ENCODE measurements at regions of chrX and their contacts with region 1.

Region 1: DNA sequence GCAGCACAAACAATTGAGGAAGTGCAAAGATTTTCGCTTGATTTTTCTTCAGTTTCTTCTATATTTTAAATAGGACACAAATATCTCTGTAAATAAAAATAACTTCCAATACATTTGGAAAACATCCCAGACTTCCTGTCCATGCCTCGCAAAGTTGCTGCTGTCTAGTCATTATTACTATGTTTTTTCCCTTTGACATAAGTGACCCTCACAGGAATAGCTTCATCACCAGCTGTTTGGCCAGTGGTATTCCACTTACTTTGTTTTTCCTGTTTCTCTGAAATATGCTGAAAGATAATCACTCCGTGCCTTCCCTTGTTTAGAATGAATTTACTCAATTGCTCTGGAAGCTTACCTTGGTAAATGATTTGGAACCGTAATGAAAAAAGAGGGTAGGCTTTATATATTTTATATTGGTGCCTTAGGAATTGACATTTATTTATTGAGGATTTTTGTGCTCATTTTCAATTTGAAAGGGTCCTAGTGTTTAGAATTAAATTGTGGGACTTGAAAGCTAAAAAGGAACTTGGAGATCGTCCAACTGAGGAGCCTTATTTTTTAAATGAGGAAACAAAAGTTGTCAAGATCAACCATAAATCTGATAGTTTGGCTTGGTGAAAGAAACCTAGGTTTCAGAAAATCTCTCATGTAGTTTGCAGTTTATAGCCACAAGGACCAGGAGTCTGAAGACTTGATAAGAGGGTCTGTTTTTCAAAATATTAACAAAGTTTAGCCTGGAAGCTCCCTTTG is 65.6 kb downstream of the CDKL5 start:
- DNase-seq: no peak
- H3K4me3 ChIP-seq: no peak overlapping the region
- H3K27ac ChIP-seq: no peak overlapping the region
- H3K4me1 ChIP-seq: no peaks in the 10 kb centered on the region
- H3K27me3 ChIP-seq: no peaks in the 10 kb centered on the region
- CTCF ChIP-seq: no peak

Region 2: GRCh38 chrX:17435466-17435865 is 1055.5 kb before region 1 on chrX:
- intact Hi-C with region 1: loop called (anchors 10 kb)
- DNase-seq: no peak
- H3K4me3 ChIP-seq: no peak overlapping the region
- H3K27ac ChIP-seq: no peak overlapping the region
- H3K4me1 ChIP-seq: peaks cover 0 to 1% (median 0%) of the 10 kb centered on the region in 4 donors
- H3K27me3 ChIP-seq: no peaks in the 10 kb centered on the region
- CTCF ChIP-seq: no peak